Adrenal gland (tissue), 19 donors: ENCODE measurements at regions of chr12 and their contacts with region 1.

Region 1: GRCh38 chr12:62934799-62935674 is at the start of gene PPM1H:
- DNase-seq: peak; percentile 46 to 69 (median 61)
- H3K4me3 ChIP-seq: peak within 1 kb of the TSS; percentile 61 to 92 (median 87)
- H3K27ac ChIP-seq: peak within 1 kb of the TSS in 2 of 5 donors; percentile 29 to 47
- H3K4me1 ChIP-seq: peaks cover 7 to 12% of the 10 kb centered on the region in 2 donors
- H3K27me3 ChIP-seq: no peaks in the 10 kb centered on the region
- CTCF ChIP-seq: peak; percentile 23 to 57 (median 34)
- POLR2A ChIP-seq: peak in 1 of 2 donors; percentile 23
- total RNA-seq, gene PPM1H: 1.9 to 5.5 (median 3.4) TPM

Region 2: DNA sequence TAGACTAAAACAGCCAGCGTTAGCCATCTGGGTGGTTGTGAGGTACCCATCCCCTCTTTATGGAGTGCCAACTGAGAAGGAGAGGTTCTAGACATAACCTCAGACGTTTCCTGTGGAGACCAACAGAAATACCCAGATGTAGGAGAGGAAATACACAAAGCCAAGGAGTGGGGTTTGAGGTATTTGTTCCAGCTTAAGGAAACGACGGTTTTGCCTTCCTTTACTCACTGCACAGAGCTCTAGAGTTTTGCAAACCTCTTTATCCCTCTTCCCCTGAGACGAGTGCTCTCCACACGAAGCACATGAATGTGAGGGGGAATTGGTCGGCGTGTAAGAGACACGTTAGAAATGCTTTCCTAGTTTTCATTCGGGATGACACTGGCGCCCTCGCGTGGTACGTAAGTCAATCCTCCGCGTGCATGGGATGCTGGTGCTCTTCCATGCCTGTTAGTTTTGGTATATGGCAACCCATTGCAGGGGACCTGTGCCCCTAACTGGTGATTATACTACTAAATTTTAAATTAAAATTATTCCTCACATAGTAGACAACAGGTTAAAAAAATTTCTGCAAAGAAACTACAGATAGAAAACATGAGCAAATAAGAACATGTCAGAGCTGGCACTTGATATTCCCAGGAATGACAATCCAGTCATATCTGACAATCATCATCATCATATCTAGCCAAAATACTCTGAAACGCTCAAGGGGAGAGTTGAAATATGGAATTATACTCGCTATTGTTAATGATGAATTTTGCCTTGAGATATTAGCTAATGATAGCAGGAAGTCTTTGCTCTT is 121.8 kb before region 1 on chr12:
- intact Hi-C with region 1: loop called in 1 of 2 experiments (anchors 10 kb)
- DNase-seq: peak; percentile 35 to 77 (median 65)
- H3K4me3 ChIP-seq: no peak overlapping the region
- H3K27ac ChIP-seq: no peak overlapping the region
- H3K4me1 ChIP-seq: no peaks in the 10 kb centered on the region
- H3K27me3 ChIP-seq: no peaks in the 10 kb centered on the region
- CTCF ChIP-seq: peak; percentile 23 to 64 (median 48)
- POLR2A ChIP-seq: no peak